ENCODE measurements at regions of chr7 and their contacts with region 1.

Region 1: DNA sequence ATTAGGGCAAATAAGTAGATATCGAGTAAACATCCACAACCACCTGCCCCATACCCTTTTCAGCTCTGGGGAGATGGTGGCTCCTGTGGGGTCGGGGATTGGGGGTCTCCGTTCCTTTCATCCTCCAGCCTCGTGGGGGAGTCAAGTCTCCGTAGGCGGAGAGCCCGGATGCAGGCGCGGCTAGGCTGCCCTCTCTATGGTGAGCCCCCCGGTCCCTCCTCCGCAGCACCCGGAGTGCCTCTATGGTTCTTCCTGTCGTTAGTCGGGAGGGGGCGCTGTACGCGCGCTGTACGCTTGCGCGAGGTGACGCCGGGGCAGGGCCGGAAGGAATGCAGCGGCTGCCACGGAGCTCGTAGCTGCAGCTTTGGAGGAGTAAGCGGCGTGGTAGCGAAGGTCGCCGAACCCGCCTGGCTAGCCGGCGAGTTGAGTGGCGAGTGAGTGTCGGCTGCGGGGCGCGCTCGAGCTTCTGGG is 14.8 kb upstream of the MMD2 start:
- DNase-seq: peak; percentile 96
- ATAC-seq: peak; percentile 96
- H3K4me3 Mint-ChIP-seq: peak overlapping the region; percentile 99
- H3K27ac Mint-ChIP-seq: peak overlapping the region; percentile 97
- H3K4me1 Mint-ChIP-seq: peaks cover 21% of the 10 kb centered on the region
- H3K27me3 Mint-ChIP-seq: no peaks in the 10 kb centered on the region
- CTCF ChIP-seq: peak; percentile 50

Region 2: DNA sequence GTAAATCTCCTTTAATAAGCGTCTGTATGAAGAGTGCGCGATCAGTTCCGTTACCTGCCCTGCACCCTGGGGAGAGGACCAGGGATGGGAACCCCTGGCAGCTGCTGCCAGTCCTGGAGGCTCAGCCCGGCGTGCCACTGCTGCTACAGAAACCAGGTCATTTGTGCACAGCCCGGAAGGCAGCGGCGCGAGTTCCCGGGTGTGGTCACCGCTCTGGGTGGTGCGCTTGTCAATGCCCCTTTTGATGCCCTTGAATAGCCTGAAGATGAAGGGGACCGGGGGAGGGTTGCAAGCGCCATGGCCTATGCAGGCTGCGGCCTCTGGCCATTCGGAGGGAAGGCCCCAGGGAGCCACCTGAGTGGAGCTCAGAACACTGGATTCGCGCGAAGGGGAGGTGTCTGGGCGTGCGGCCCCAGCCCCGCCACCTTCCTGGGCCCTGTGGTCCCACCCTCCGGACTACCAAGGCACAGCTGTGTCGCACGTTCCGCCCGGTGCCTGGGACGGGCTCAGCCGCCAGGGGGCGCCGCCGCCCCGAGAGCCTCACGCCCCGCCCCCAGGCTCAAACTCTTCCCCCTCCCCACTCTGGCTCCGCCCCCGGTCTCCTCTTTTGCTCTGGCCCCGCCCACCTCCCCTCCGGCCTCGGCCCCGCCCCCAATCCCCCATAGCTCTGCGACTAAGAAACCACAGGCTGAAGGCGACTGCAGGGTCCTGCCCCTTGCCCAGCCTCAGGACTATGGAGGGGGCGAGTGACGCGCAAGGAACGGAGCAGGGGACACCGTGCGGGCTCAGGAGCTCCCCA is 181.8 kb before region 1 on chr7:
- CTCF ChIA-PET with region 1: interaction called, 3 read pairs
- POLR2A ChIA-PET with region 1: interaction called, 11 read pairs
- intact Hi-C with region 1: loop called (anchors 2 kb)
- DNase-seq: peak; percentile 80
- ATAC-seq: peak; percentile 91
- H3K4me3 Mint-ChIP-seq: no peak overlapping the region
- H3K27ac Mint-ChIP-seq: no peak overlapping the region
- H3K4me1 Mint-ChIP-seq: peaks cover 4% of the 10 kb centered on the region
- H3K27me3 Mint-ChIP-seq: no peaks in the 10 kb centered on the region
- CTCF ChIP-seq: no peak

Region 3: DNA sequence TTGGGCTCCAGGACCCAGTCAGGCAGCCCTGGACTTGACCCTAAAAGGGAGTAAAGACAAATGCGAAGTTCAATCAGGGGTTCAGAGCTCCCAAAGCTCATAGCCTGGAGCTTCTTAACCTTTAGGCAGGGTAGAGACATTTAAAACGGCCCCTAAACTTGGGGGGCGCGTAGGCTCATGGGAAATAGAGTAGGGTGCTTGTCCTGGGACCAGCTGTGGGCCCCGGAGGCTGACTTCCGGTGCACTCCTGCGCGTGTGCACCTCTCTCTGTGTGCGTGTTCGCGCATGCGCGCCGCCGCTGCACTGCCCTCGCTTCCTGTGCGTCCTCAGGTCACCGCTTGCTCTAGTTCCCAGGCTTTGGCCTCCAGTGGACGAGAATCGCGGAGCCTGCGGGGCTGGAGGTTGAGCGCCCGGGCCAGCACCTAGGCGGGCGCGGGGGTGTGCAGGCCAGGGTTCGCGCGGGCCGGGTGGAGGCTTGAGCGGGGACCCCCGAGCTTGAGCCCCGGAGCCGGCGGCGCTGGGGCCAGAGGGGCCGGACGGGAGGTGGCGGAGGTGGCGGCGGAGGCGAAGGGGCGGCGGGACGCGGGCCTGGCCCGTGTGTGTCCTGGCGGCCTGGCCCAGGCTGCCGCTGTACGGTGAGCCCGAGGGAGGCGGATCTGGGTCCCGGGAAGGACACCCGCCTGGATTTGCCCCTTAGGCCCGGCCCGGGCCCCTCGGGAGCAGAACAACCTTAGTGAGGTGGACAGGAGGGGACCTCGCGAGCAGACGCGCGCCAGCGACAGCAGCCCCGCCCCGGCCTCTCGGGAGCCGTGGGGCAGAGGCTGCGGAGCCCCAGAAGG is 72.0 kb after region 1 on chr7 and contains the start of gene RBAK:
- CTCF ChIA-PET with region 1: interaction called, 6 read pairs
- POLR2A ChIA-PET with region 1: no interaction called
- intact Hi-C with region 1: loop called (anchors 1 kb)
- DNase-seq: peak; percentile 83
- ATAC-seq: peak; percentile 99
- H3K4me3 Mint-ChIP-seq: peak within 1 kb of the TSS; percentile 92
- H3K27ac Mint-ChIP-seq: peak within 1 kb of the TSS; percentile 79
- H3K4me1 Mint-ChIP-seq: peaks cover 21% of the 10 kb centered on the region
- H3K27me3 Mint-ChIP-seq: no peaks in the 10 kb centered on the region
- CTCF ChIP-seq: no peak
- total RNA-seq, gene RBAK: 16.3 and 20.2 TPM in 2 replicates

Region 4: DNA sequence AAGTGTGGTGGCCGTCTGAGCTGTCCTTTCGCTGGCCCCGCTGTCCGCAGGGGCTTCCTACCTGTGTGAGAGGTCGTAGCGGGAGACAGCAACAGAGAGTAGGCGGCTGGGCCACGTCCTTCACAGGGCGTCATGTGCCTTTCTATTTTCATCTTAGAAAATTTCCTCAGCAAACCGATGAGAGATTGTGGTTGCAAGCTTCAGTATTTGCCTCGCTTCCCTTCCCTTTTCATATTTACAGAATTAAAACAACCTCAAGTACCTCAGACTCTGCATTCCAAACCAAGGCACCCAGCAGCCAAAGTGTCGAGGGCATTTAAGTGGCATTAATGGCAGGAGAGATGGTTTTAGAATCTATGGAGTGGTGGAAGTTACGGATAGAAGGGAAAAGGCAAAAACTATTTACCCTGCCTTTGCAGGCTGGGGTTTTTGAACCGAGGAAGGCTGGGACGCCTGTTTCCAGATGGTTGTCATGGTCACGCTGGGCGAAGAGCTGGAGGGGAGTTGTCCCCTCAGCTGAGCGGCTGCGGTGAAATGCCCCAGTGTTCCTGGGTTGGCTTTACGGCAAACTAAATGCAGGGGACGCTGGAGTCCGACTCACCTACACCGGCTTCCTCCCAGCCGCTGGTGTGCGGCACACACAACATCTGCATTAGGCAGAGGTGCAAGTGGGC is 258.2 kb after region 1 on chr7:
- CTCF ChIA-PET with region 1: no interaction called
- POLR2A ChIA-PET with region 1: no interaction called
- intact Hi-C with region 1: loop called (anchors 5 kb)
- DNase-seq: peak; percentile 60
- ATAC-seq: peak; percentile 65
- H3K4me3 Mint-ChIP-seq: peak overlapping the region; percentile 81
- H3K27ac Mint-ChIP-seq: peak overlapping the region; percentile 99
- H3K4me1 Mint-ChIP-seq: peaks cover 75% of the 10 kb centered on the region
- H3K27me3 Mint-ChIP-seq: no peaks in the 10 kb centered on the region
- CTCF ChIP-seq: no peak

Region 5: DNA sequence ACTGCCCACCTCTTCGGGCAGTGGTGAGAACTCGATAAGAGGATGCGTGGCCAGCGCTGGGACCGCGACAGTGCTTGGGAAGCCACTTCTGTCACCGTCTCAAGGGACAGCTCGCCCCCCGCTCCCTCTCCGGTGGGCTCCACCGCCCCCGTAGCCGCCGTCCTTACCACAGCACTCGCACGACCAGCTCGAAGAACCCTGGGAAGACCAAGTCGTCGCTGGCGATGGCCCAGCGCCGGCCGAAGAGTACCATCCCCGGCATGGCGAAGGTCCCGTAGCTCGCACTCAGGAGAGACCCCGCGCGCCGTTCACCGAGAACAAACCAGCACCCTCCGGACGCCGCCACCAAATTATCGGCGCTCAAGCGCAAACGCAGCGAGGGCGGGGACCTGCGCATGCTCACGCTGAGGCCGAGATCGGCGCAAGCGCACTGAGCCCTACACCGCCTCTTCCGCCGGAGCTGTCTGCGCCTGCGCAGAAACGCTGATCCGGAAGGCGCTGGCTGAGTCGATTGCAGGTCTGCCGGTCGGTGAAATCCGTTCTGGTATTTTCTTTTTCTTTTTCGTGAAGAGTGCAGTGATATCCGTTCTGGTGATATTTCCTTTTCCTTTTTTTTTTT is 1473.9 kb after region 1 on chr7 and contains the start of gene DAGLB:
- CTCF ChIA-PET with region 1: no interaction called
- POLR2A ChIA-PET with region 1: interaction called, 12 read pairs
- intact Hi-C with region 1: no loop called
- DNase-seq: peak; percentile 95
- ATAC-seq: peak; percentile 88
- H3K4me3 Mint-ChIP-seq: peak within 1 kb of the TSS; percentile 95
- H3K27ac Mint-ChIP-seq: peak within 1 kb of the TSS; percentile 92
- H3K4me1 Mint-ChIP-seq: peaks cover 22% of the 10 kb centered on the region
- H3K27me3 Mint-ChIP-seq: no peaks in the 10 kb centered on the region
- CTCF ChIP-seq: no peak
- total RNA-seq, gene DAGLB: 13.3 and 18.3 TPM in 2 replicates

Measured in activated B cell treated with CpG ODN at 0.5 μM for 24 hours (primary cell).